Mammary epithelial cell (primary cell): ENCODE measurements at regions of chr17 and their contacts with region 1.

Region 1: DNA sequence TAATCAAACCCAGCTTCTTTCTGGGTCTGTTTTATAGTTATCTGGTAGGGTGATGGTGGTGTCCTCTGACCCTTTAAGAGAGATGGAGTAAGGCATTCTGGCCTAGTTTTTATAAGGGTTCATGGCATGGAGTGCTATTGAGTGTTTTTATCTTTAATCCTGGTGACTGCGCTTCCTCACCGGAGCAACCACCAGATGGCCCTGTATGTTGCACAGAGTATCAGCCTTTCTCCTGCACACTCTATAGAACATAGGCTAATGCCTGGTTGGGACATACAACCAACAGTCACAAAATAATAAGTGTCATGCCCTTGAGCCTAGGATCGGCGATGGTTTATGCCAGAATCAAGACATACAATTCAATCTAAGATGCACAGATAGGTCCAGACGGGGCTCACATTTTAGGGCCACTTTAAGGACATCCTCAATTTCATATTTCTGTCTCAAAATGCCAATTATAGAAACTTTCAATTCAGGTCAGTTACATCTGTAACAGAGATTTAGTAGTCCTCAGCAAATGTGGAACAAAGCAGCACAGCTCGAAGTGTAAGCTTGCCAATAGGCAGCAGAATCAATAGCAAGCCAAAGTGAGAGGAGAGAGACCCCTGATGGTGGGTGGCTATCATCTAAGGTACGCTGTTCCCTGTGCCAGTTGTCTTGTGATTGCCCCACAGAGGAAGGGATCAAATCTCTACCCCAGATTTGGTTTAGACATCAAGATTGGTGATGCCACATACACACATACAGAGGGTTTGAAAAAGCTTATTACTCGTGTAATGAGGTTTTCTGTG is 37.2 kb upstream of the HOXB9 start:
- DNase-seq: no peak
- H3K4me3 ChIP-seq: no peak overlapping the region
- H3K27ac ChIP-seq: no peak overlapping the region
- H3K4me1 ChIP-seq: no peaks in the 10 kb centered on the region
- H3K27me3 ChIP-seq: no peaks in the 10 kb centered on the region
- CTCF ChIP-seq: no peak

Region 2: GRCh38 chr17:48623583-48623982 is 39.7 kb before region 1 on chr17:
- CTCF ChIA-PET with region 1: no interaction called
- dilution Hi-C with region 1: no loop called
- in situ Hi-C with region 1: no loop called
- intact Hi-C with region 1: no loop called
- DNase-seq: no peak
- H3K4me3 ChIP-seq: no peak overlapping the region
- H3K27ac ChIP-seq: no peak overlapping the region
- H3K4me1 ChIP-seq: peaks cover 14% of the 10 kb centered on the region
- H3K27me3 ChIP-seq: peaks cover 86% of the 10 kb centered on the region
- CTCF ChIP-seq: no peak

Region 3: DNA sequence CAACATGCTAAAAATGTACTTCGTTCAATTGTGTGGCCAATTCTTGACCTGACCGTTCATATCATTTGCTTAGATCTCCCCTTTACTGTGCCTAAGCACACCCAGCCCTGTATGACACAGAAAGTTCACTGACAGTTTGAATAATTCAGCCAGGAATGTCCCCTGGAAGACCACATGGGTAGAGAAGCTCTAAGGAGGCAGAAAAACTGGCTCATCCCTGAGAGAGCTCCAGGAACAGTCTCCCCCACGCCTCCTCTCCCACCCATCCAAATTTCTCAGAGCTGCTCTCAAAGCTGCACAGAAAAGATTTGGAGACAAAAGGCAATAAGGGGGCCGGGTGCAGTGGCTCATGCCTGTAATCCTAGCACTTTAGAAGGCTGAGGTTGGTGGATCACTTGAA is 47.8 kb after region 1 on chr17:
- CTCF ChIA-PET with region 1: no interaction called
- dilution Hi-C with region 1: no loop called
- in situ Hi-C with region 1: no loop called
- intact Hi-C with region 1: no loop called
- DNase-seq: no peak
- H3K4me3 ChIP-seq: no peak overlapping the region
- H3K27ac ChIP-seq: no peak overlapping the region
- H3K4me1 ChIP-seq: no peaks in the 10 kb centered on the region
- H3K27me3 ChIP-seq: peaks cover 13% of the 10 kb centered on the region
- CTCF ChIP-seq: no peak

Region 4: DNA sequence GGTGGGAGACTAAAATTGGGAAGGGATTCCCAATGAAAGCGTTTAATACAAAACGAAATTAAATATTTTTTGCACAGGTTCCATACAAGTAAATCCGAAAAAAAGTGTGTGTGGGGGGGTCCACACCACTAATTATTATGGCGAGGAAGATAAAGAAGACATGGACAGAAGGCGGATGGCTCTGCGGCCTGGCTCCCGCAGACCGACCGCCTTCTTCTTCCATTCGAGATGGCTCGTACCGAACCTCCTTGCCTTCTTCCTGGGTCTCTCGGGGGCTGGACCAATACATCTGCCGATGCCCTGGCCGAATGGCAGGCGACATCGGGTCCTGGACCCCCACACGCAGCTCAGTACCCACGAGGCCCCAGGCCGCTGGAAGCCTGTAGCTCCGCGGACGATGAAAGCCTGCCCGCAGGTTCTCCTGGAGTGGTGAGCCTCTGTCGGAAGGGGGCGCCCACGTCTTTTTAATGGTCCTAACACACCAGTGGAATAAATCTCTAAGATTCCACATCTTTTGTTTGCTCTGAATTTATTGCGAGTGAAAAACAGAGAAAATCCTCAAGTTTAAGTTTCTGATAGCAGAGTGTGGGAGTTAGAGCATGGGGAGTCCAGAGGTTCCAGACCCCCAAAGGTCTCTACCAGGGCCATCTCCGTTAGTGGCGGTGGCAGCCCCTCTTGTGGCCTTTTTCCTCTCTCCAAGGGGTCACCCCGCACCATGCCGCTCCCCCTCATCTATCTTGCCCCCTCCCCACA is 61.1 kb after region 1 on chr17:
- CTCF ChIA-PET with region 1: no interaction called
- dilution Hi-C with region 1: loop called (anchors 5 kb)
- in situ Hi-C with region 1: no loop called
- intact Hi-C with region 1: no loop called
- DNase-seq: peak; percentile 51
- H3K4me3 ChIP-seq: no peak overlapping the region
- H3K27ac ChIP-seq: no peak overlapping the region
- H3K4me1 ChIP-seq: no peaks in the 10 kb centered on the region
- H3K27me3 ChIP-seq: peaks cover 83% of the 10 kb centered on the region
- CTCF ChIP-seq: peak; percentile 54 to 76